Activated CD8-positive, alpha-beta T cell treated with anti-CD3 and anti-CD28 coated beads, Interleukin-2, amount 10 ng/mL, durations not matched to agents 7 days and 5 days (primary cell): ENCODE measurements at regions of chr11 and their contacts with region 1.

Region 1: DNA sequence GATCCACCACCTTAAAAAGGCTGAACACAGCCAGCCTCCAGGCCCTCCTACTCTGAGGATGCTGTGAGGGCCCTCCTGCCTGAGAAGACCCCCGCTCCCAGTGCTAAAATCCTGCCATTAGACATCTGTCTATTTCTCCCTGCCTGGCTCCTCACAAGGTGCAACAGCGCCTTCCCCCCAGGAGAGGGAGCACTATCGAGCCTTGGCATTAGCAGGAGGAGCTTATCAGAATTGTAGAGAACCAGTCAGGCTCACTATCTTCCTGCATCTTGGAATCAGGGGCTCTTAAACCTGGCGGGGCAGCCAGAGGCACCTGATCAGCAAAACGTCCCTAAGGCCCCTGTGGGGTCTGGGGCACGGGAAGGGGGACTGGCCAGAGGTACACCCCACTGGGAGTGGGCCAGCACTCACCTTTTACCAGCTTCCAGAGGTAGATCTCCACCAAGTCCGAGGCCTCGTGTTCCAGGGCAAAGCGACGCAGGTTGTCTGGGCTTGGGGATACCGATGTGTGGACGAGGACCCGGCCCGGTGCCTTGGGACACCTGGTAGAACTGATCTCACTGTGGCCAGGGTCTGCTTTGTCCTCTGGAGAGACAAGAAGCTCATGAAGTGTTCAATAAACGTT is 28.7 kb downstream of the CHRDL2 start:
- DNase-seq: peak; percentile 71
- ATAC-seq: peak; percentile 82
- H3K4me3 Mint-ChIP-seq: no peak overlapping the region
- H3K27ac Mint-ChIP-seq: no peak overlapping the region
- H3K4me1 Mint-ChIP-seq: no peaks in the 10 kb centered on the region
- H3K27me3 Mint-ChIP-seq: no peaks in the 10 kb centered on the region

Region 2: GRCh38 chr11:74615311-74615710 is 87.2 kb before region 1 on chr11:
- CTCF ChIA-PET with region 1: no interaction called
- POLR2A ChIA-PET with region 1: no interaction called
- DNase-seq: no peak
- ATAC-seq: no peak
- H3K4me3 Mint-ChIP-seq: no peak overlapping the region
- H3K27ac Mint-ChIP-seq: no peak overlapping the region
- H3K4me1 Mint-ChIP-seq: no peaks in the 10 kb centered on the region
- H3K27me3 Mint-ChIP-seq: no peaks in the 10 kb centered on the region

Region 3: GRCh38 chr11:74687237-74688023 is 15.1 kb before region 1 on chr11:
- CTCF ChIA-PET with region 1: interaction called, 25 read pairs
- POLR2A ChIA-PET with region 1: no interaction called
- DNase-seq: no peak
- ATAC-seq: no peak
- H3K4me3 Mint-ChIP-seq: no peak overlapping the region
- H3K27ac Mint-ChIP-seq: no peak overlapping the region
- H3K4me1 Mint-ChIP-seq: no peaks in the 10 kb centered on the region
- H3K27me3 Mint-ChIP-seq: peaks cover 21% of the 10 kb centered on the region

Region 4: GRCh38 chr11:74717221-74717969 is 14.9 kb after region 1 on chr11:
- CTCF ChIA-PET with region 1: interaction called, 13 read pairs
- POLR2A ChIA-PET with region 1: no interaction called
- DNase-seq: no peak
- ATAC-seq: no peak
- H3K4me3 Mint-ChIP-seq: no peak overlapping the region
- H3K27ac Mint-ChIP-seq: no peak overlapping the region
- H3K4me1 Mint-ChIP-seq: no peaks in the 10 kb centered on the region
- H3K27me3 Mint-ChIP-seq: peaks cover 8% of the 10 kb centered on the region

Region 5: DNA sequence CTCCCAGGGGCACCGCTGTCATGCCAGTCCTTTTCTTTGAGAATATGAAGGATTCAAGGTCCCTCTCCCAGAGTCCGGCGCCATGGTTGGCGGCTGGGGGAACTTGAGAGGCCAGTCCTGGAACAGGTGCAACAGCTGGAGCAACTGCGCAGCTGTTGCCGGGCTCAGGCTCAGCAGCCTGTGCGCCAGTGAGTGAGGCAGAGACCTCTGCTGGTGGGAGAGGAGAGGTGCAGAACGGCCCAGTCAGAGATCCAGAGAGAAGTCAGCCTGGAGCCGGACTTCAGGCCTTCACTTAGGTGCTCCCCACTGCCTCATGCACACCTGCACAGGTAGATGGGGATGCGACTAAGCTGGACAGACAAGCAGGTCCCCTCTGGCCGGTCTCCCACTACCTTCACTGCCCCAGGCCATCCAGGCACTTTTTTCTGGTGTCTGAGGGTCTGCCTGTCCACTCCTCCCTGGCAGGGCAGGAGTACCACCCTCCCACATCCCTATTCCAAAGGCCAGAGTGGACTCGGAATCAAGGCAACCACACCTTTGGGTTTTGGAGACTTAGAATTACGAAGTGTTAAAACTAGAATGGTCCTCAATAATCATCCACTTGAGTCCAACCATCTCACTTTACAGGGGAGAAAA is 24.2 kb after region 1 on chr11:
- CTCF ChIA-PET with region 1: interaction called, 56 read pairs
- POLR2A ChIA-PET with region 1: no interaction called
- DNase-seq: peak; percentile 67
- ATAC-seq: peak; percentile 93
- H3K4me3 Mint-ChIP-seq: no peak overlapping the region
- H3K27ac Mint-ChIP-seq: no peak overlapping the region
- H3K4me1 Mint-ChIP-seq: no peaks in the 10 kb centered on the region
- H3K27me3 Mint-ChIP-seq: peaks cover 47% of the 10 kb centered on the region

Region 6: DNA sequence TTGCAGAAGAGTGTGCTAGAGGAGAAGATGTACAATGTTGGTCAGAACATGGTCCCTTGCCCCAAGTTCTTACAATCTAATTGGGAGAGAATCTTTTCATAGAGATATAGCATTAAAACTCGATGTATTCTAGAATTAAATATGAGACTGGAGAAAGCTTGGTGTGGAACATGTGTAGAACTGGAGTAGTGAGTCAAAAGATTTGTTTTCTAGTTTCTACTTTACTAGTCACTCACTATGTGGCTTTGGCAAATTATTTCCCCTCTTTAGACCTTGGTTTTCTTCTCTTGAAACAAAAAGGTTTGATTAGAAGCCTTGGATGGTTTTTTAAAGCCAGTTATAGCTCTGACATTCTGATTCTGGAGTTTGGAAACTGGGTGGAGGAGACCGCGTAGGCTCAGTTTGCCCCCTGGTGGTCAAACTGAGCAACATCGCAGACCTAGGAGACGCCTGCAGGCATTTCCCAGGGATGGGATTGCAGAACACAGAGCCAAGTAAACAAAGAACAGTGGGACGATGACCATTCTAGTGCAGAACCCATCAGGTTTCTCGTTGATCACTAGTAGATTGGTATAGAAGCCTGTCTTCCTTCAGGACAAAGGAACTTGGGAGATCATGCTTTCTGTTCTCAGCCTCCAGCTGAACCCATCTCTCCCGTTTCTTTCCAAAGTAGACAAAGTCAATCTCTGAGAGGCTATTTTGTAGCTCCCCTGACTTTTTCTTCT is 37.2 kb after region 1 on chr11:
- CTCF ChIA-PET with region 1: interaction called, 33 read pairs
- POLR2A ChIA-PET with region 1: interaction called, 3 read pairs
- DNase-seq: peak; percentile 57
- ATAC-seq: peak; percentile 86
- H3K4me3 Mint-ChIP-seq: no peak overlapping the region
- H3K27ac Mint-ChIP-seq: no peak overlapping the region
- H3K4me1 Mint-ChIP-seq: no peaks in the 10 kb centered on the region
- H3K27me3 Mint-ChIP-seq: peaks cover 37% of the 10 kb centered on the region

Region 7: GRCh38 chr11:74870485-74870884 is 168.0 kb after region 1 on chr11:
- CTCF ChIA-PET with region 1: interaction called, 22 read pairs
- POLR2A ChIA-PET with region 1: no interaction called
- DNase-seq: no peak
- ATAC-seq: no peak
- H3K4me3 Mint-ChIP-seq: no peak overlapping the region
- H3K27ac Mint-ChIP-seq: no peak overlapping the region
- H3K4me1 Mint-ChIP-seq: no peaks in the 10 kb centered on the region
- H3K27me3 Mint-ChIP-seq: no peaks in the 10 kb centered on the region